Dorsolateral prefrontal cortex (tissue), 120 donors: ENCODE measurements at regions of chr7 and their contacts with region 1.

Region 1: GRCh38 chr7:5822742-5823503 is 41.5 kb upstream of the RNF216 start:
- DNase-seq: peak; percentile 95 to 98 (median 96)
- H3K4me3 ChIP-seq: peak overlapping the region; percentile 55 to 91 (median 77)
- H3K27ac ChIP-seq: peak overlapping the region; percentile 7 to 93 (median 85)
- H3K27me3 ChIP-seq: no peaks in the 10 kb centered on the region
- CTCF ChIP-seq: peak in 44 of 56 donors; percentile 18 to 62 (median 35)

Region 2: GRCh38 chr7:5218564-5219360 is 604.2 kb before region 1 on chr7:
- intact Hi-C with region 1: no loop called
- DNase-seq: peak in 5 of 10 donors; percentile 5 to 28 (median 9)
- H3K4me3 ChIP-seq: no peak overlapping the region
- H3K27ac ChIP-seq: peak overlapping the region in 22 of 59 donors; percentile 1 to 67 (median 40)
- H3K27me3 ChIP-seq: no peaks in the 10 kb centered on the region
- CTCF ChIP-seq: no peak

Region 3: GRCh38 chr7:5334671-5335070 is 488.3 kb before region 1 on chr7:
- intact Hi-C with region 1: no loop called
- DNase-seq: no peak
- H3K4me3 ChIP-seq: no peak overlapping the region
- H3K27ac ChIP-seq: no peak overlapping the region
- H3K27me3 ChIP-seq: no peaks in the 10 kb centered on the region
- CTCF ChIP-seq: no peak

Region 4: DNA sequence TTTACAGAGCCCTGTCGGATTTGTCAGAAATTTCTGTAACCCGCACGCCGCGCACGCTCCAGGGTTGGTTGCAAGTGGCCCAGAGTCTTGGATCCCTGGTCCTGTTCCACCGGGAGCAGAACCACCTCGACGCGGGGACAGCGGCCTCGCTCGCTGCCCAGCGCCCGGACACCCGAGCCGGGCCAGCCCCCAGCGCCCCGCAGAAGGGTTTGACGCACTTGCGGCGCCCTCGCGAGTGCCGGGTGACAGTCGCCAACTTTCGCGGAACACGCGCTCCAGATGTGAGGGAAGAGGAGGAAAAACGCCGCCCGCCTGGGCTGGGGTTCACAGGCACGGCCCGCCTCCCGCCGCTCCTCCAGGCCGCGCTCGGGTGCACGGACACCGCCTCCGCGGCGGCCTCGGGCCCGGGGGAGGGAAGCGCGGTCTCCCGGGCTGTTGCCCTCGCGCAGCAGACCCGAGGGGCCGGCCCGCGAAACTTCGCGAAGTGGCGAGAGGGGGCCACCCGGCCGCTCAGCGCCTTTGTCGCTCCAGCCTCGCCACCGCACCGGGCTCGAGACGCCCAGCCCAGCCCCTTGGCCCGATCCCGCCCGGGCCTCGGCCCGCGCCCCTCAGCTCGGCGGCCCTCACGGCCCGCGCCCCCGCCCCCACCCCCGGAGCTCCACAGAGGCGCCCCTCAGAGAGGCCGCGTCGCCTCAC is 42.0 kb before region 1 on chr7:
- intact Hi-C with region 1: loop called in 1 of 2 experiments (anchors 2 kb)
- DNase-seq: peak in 8 of 10 donors; percentile 22 to 65 (median 35)
- H3K4me3 ChIP-seq: peak overlapping the region; percentile 57 to 91 (median 77)
- H3K27ac ChIP-seq: peak overlapping the region; percentile 57 to 95 (median 87)
- H3K27me3 ChIP-seq: no peaks in the 10 kb centered on the region
- CTCF ChIP-seq: no peak

Region 5: DNA sequence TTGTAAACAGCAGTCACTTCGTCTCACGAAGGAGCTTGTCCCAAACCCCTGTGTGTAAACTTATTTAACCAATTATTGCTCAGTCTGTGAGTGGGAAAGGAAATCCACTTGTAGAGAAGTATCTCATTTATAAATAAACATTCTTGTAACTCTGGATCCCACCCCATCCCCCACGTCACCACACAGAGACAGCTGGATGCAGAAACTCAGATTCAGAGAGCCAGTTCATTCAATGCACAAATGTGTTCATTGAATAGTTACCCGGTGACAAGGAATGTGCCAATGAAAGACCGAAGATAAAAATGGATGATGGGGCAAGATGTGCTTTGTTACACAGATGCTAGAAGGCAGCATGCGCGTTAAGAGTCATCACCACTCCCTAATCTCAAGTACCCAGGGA is 49.4 kb after region 1 on chr7:
- intact Hi-C with region 1: no loop called
- DNase-seq: peak in 4 of 10 donors; percentile 12 to 68 (median 43)
- H3K4me3 ChIP-seq: peak overlapping the region in 27 of 59 donors; percentile 0 to 44 (median 24)
- H3K27ac ChIP-seq: peak overlapping the region in 57 of 59 donors; percentile 6 to 85 (median 67)
- H3K27me3 ChIP-seq: no peaks in the 10 kb centered on the region
- CTCF ChIP-seq: no peak